ENCODE measurements at regions of chr2 and their contacts with region 1.

Region 1: GRCh38 chr2:119366649-119367471 is at the starts of genes C2orf76 and DBI:
- DNase-seq: peak; percentile 95 to 96
- ATAC-seq: peak; percentile 97 to 98 (median 98)
- H3K4me3 ChIP-seq: peak within 1 kb of the TSS; percentile 43 to 93 (median 72)
- H3K27ac ChIP-seq: peak within 1 kb of the TSS; percentile 73 to 96 (median 91)
- H3K4me1 ChIP-seq: peaks cover 9 to 70% (median 52%) of the 10 kb centered on the region in 9 donors
- H3K27me3 ChIP-seq: no peaks in the 10 kb centered on the region
- CTCF ChIP-seq: no peak
- total RNA-seq, gene C2orf76: 5.1 to 9.9 (median 8.2) TPM
- total RNA-seq, gene DBI: 195 to 383 (median 253) TPM

Region 2: GRCh38 chr2:119387381-119388129 is 20.7 kb after region 1 on chr2:
- intact Hi-C with region 1: loop called in 1 of 10 experiments (anchors 1 kb)
- DNase-seq: peak; percentile 50 to 74
- ATAC-seq: peak; percentile 72 to 91 (median 83)
- H3K4me3 ChIP-seq: peak overlapping the region in 1 of 10 donors; percentile 1
- H3K27ac ChIP-seq: peak overlapping the region in 9 of 10 donors; percentile 36 to 86 (median 71)
- H3K4me1 ChIP-seq: peaks cover 4 to 40% (median 28%) of the 10 kb centered on the region in 9 donors
- H3K27me3 ChIP-seq: no peaks in the 10 kb centered on the region
- CTCF ChIP-seq: peak in 7 of 9 donors; percentile 18 to 58 (median 37)